CD14-positive monocyte (primary cell): ENCODE measurements at regions of chr4 and their contacts with region 1.

Region 1: GRCh38 chr4:184851200-184851541 is 25.4 kb upstream of the ACSL1 start:
- DNase-seq: peak; percentile 90 to 96 (median 91)
- H3K4me3 ChIP-seq: peak overlapping the region in 1 of 3 experiments; percentile 52
- H3K4me3 Mint-ChIP-seq: no peak overlapping the region
- H3K27ac ChIP-seq: peak overlapping the region; percentile 83 to 93
- H3K27ac Mint-ChIP-seq: no peak overlapping the region
- H3K4me1 ChIP-seq: peaks cover 79 to 88% of the 10 kb centered on the region in 2 donors
- H3K4me1 Mint-ChIP-seq: peaks cover 12% of the 10 kb centered on the region
- H3K27me3 ChIP-seq: no peaks in the 10 kb centered on the region
- H3K27me3 Mint-ChIP-seq: peaks cover 2 to 3% (median 3%) of the 10 kb centered on the region in 3 donors
- CTCF ChIP-seq: no peak

Region 2: DNA sequence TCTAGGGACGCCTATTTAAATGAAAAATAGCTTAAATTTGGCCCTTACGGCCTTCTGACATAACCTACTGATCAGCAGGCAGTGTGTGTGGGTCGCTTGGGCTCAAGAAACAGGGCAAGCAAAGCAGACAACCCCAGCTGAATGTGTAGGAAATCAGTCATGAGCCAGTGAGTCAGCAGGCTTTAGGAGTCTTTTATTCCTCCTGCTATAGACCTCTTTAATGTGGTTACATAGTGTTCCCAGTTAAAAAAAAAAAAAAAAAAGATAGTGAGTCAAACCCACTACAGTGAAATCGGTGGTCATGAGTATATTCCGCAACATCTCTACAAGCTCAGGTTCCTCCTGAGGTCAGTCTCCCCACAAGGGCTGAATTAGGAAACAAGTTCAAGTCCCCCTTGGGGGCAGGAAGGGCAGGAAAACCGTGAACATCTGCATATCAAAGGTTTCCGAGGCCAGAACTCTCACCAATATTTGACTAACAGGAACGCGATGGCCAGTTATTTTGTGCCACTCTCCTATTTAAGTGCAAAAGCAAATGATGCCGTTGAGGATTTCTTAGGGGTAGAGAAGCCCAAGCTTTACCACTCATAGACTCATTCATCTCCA is 58.1 kb before region 1 on chr4:
- intact Hi-C with region 1: loop called in 1 of 2 experiments (anchors 2 kb)
- DNase-seq: peak; percentile 89 to 97 (median 96)
- H3K4me3 ChIP-seq: peak overlapping the region in 1 of 3 experiments; percentile 34
- H3K4me3 Mint-ChIP-seq: no peak overlapping the region
- H3K27ac ChIP-seq: peak overlapping the region; percentile 47 to 81
- H3K27ac Mint-ChIP-seq: peak overlapping the region; percentile 83 to 97 (median 95)
- H3K4me1 ChIP-seq: peaks cover 22 to 32% of the 10 kb centered on the region in 2 donors
- H3K4me1 Mint-ChIP-seq: peaks cover 38% of the 10 kb centered on the region
- H3K27me3 ChIP-seq: no peaks in the 10 kb centered on the region
- H3K27me3 Mint-ChIP-seq: peaks cover 0 to 2% (median 0%) of the 10 kb centered on the region in 3 donors
- CTCF ChIP-seq: no peak

Region 3: DNA sequence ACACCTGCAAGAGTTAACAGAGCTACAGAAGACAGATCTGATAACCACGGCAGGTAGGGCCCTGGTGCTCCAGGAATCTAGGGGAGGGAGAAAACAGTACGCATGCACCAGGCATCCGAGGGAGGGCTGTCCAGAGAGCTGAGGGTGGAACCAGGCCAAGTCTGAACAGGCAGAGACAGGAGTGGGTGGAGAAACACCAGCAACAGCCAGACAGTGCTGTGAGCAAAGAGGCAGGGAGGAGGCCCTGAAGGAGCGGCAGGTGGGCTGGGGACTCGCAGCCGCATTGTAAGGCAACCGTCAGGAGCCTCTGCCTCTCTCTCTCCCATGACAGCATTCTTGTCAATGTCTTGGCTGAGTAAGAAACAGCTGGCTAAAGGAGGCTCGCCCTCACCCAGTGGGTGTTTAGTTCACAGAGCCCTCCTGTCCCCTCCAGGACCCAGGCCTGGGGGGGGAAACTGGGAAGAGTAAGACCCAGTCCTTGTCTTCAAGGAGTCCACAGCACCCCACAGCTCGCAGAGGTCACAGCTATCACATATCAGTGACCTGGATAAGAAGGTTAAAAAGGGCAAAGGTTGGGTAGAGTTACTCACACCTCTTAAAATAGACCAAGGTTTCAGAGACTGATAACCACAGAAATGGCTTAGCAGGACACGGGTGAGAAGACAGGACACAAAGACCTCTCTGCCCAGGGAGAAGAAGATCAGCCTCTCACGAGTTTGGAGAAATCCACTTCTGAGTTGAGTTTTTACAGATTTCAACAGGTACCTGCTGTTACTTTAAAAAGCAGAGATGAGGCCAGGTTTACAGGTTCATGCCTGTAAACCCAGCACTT is 35.9 kb before region 1 on chr4:
- intact Hi-C with region 1: loop called in 1 of 2 experiments (anchors 5 kb)
- DNase-seq: no peak
- H3K4me3 ChIP-seq: peak overlapping the region in 1 of 3 experiments; percentile 44
- H3K4me3 Mint-ChIP-seq: peak overlapping the region; percentile 65 to 81
- H3K27ac ChIP-seq: peak overlapping the region; percentile 16 to 79
- H3K27ac Mint-ChIP-seq: peak overlapping the region; percentile 30 to 96 (median 91)
- H3K4me1 ChIP-seq: peaks cover 99% of the 10 kb centered on the region in 2 donors
- H3K4me1 Mint-ChIP-seq: peaks cover 97% of the 10 kb centered on the region
- H3K27me3 ChIP-seq: no peaks in the 10 kb centered on the region
- H3K27me3 Mint-ChIP-seq: peaks cover 0 to 1% (median 0%) of the 10 kb centered on the region in 3 donors
- CTCF ChIP-seq: no peak

Region 4: GRCh38 chr4:184896868-184897715 is 45.9 kb after region 1 on chr4:
- intact Hi-C with region 1: loop called (anchors 2 to 5 kb)
- DNase-seq: peak; percentile 90 to 98 (median 95)
- H3K4me3 ChIP-seq: peak overlapping the region in 1 of 3 experiments; percentile 62
- H3K4me3 Mint-ChIP-seq: peak overlapping the region; percentile 39 to 76
- H3K27ac ChIP-seq: peak overlapping the region; percentile 92 to 97
- H3K27ac Mint-ChIP-seq: peak overlapping the region; percentile 95 to 100 (median 98)
- H3K4me1 ChIP-seq: peaks cover 61 to 68% of the 10 kb centered on the region in 2 donors
- H3K4me1 Mint-ChIP-seq: peaks cover 67% of the 10 kb centered on the region
- H3K27me3 ChIP-seq: no peaks in the 10 kb centered on the region
- H3K27me3 Mint-ChIP-seq: peaks cover 0 to 2% (median 2%) of the 10 kb centered on the region in 3 donors
- CTCF ChIP-seq: no peak